ENCODE measurements at regions of chr11 and their contacts with region 1.

Region 1: GRCh38 chr11:73597956-73598718 is at the start of gene FAM168A:
- DNase-seq: peak; percentile 98
- H3K4me3 ChIP-seq: peak within 1 kb of the TSS; percentile 68 to 100 (median 75)
- H3K27ac ChIP-seq: peak within 1 kb of the TSS; percentile 48
- H3K4me1 ChIP-seq: peaks cover 8% of the 10 kb centered on the region
- H3K27me3 ChIP-seq: no peaks in the 10 kb centered on the region
- CTCF ChIP-seq: peak; percentile 5 to 31
- total RNA-seq, gene FAM168A: 28.2 to 33.4 TPM

Region 2: GRCh38 chr11:73530109-73530508 is 68.0 kb before region 1 on chr11:
- CTCF ChIA-PET with region 1: no interaction called
- dilution Hi-C with region 1: no loop called
- in situ Hi-C with region 1: no loop called
- intact Hi-C with region 1: loop called (anchors 1 kb)
- DNase-seq: no peak
- H3K4me3 ChIP-seq: no peak overlapping the region
- H3K27ac ChIP-seq: no peak overlapping the region
- H3K4me1 ChIP-seq: peaks cover 22% of the 10 kb centered on the region
- H3K27me3 ChIP-seq: no peaks in the 10 kb centered on the region
- CTCF ChIP-seq: peak; percentile 22 to 51

Region 3: GRCh38 chr11:73612601-73613140 is 14.5 kb after region 1 on chr11:
- CTCF ChIA-PET with region 1: no interaction called
- dilution Hi-C with region 1: no loop called
- in situ Hi-C with region 1: no loop called
- intact Hi-C with region 1: loop called (anchors 2 kb)
- DNase-seq: peak; percentile 77
- H3K4me3 ChIP-seq: no peak overlapping the region
- H3K27ac ChIP-seq: no peak overlapping the region
- H3K4me1 ChIP-seq: no peaks in the 10 kb centered on the region
- H3K27me3 ChIP-seq: no peaks in the 10 kb centered on the region
- CTCF ChIP-seq: no peak